ENCODE measurements at regions of chr11 and their contacts with region 1.

Region 1: DNA sequence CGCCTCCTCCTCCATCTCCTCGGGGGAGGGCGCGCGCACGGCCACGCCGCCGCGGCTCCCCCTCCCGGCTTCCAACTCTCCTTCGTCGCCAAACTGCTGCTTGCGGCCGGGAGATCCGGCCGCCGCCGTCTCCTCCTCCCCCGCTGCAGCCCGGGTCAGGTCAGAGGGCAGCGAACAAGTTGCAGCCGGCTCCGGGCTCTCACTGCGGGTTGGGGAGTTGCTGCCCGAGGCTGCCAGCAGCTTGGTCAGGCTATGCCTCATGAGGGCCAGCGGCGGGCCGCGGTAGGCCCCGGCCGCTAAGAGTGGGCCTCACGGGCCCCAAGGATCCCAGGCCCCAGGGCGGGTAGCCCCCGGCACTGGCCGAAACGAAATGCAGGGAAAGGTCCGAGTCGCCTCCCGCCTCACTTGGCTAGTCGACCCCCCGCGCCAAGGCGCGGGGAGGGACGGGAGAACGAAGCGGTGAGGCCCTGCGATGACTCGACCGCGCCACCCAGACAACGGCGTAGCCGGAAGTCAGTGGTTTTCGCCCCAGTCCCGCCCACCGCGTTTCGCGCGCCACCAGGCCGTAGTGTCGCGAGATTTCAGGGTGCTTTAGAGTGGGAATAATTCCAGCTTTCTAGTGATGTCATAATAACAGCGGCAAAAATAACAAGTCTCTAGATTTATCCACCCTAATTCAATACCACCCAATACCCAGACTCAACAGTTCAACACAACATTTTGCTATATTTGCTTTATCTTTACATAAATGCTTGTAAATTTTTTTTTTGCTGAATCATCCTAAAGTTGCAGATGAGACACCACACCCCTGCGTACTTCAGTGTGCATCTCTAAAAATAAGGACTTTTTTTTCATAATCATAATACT is at the start of gene CREBZF:
- DNase-seq: peak; percentile 96
- ATAC-seq: peak; percentile 78
- H3K4me3 Mint-ChIP-seq: peak within 1 kb of the TSS; percentile 98
- H3K27ac Mint-ChIP-seq: peak within 1 kb of the TSS; percentile 98
- H3K4me1 Mint-ChIP-seq: peaks cover 29% of the 10 kb centered on the region
- H3K27me3 Mint-ChIP-seq: peaks cover 1% of the 10 kb centered on the region
- total RNA-seq, gene CREBZF: 77.7 to 78.4 TPM

Region 2: DNA sequence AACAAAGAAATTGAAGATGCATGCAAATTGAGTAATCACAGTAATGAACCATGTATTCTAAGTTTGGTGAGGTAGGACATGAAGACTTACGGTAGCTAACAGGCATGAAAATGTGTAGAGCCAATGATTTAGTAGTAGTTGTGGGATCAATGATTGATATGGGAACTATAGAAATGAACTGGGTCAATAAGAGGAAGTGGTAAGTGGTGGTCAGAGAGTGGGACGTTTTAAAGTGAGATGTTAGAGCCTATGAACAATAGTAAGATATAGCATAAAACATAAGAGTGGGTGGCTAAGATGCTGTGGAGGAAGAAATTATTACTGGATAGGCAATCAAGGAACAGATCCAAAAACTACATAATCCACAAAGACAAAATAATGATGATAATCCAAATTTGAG is 82.7 kb before region 1 on chr11:
- POLR2A ChIA-PET with region 1: no interaction called
- DNase-seq: no peak
- ATAC-seq: no peak
- H3K4me3 Mint-ChIP-seq: no peak overlapping the region
- H3K27ac Mint-ChIP-seq: no peak overlapping the region
- H3K4me1 Mint-ChIP-seq: no peaks in the 10 kb centered on the region
- H3K27me3 Mint-ChIP-seq: peaks cover 13% of the 10 kb centered on the region

Region 3: DNA sequence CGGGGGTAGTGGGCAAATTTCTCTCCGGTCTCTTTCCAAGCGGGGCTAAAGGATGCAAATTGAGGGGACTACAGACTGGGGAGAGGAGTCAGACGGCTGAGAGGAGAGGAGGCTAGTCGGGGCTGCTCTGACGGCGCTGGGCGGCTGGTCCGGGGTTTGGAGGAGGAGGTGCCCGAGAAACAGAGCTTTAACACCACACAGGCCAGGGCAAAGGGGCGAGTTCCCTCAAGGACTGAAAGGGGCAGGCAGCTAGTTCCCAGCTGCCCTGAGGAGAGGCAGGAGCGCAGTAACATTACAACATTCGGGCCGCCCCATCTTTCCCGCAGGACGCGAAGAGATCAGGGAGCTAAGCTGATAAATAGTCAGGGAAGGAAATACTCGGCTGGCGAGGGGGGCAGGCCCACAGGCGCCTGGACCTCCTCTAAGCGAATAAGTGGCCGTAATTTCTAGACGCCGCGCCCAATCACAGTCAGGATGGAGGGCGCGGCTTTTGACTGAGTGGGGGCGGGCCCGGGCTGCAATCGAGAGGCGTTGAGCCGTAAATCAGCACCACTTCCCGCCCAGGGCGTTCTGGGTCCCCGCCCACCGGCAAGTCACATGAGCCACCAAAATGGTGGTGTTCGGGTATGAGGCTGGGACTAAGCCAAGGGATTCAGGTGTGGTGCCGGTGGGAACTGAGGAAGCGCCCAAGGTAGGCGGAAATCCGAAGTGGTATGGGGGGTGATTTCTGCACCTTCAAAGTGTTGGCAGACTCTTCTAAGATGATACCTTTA is 36.7 kb before region 1 on chr11 and contains the start of gene TMEM126B:
- POLR2A ChIA-PET with region 1: interaction called, 18 read pairs
- DNase-seq: peak; percentile 94
- ATAC-seq: peak; percentile 99
- H3K4me3 Mint-ChIP-seq: peak within 1 kb of the TSS; percentile 97
- H3K27ac Mint-ChIP-seq: peak within 1 kb of the TSS; percentile 95
- H3K4me1 Mint-ChIP-seq: peaks cover 29% of the 10 kb centered on the region
- H3K27me3 Mint-ChIP-seq: peaks cover 2% of the 10 kb centered on the region
- total RNA-seq, gene TMEM126B: 52.8 to 53.9 TPM

Region 4: DNA sequence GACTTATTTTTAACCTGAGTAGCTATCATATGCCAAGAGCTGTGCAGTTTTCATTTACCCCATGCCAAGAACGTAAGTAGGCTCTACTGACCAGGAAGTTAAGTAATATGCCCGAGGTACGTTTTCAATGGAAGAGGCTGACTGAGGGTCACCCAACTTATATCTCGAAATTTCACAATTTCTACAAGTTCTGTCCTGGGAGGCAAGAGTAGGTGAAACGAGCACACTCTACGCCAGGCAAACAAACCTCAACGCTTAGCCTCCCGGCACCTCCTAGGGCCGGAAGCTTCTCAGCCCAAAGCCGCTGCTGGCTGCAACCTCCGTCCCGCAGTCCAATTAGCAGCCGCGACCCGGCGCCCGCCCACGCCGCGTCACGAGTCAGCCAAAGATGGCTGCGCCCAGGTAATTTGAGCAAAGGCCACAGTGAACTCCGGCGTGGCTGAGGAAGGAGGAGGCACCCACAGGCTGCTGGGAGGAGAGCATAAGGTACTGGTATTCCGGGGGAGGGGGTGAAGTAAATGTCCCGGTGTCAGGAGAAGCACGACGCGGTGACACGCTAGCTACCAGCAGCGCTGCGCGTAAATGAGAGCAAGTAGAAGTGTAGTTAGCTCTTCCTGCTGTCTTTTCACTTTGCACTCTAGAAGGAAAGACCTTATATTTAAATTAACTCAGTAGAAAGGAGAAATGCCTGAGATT is 17.1 kb before region 1 on chr11 and contains the start of gene TMEM126A:
- POLR2A ChIA-PET with region 1: interaction called, 72 read pairs
- DNase-seq: peak; percentile 93
- ATAC-seq: peak; percentile 98
- H3K4me3 Mint-ChIP-seq: peak within 1 kb of the TSS; percentile 99
- H3K27ac Mint-ChIP-seq: peak within 1 kb of the TSS; percentile 99
- H3K4me1 Mint-ChIP-seq: peaks cover 27% of the 10 kb centered on the region
- H3K27me3 Mint-ChIP-seq: peaks cover 21% of the 10 kb centered on the region
- total RNA-seq, gene TMEM126A: 27.2 to 28.8 TPM

Region 5: GRCh38 chr11:85652786-85653447 is 11.9 kb before region 1 on chr11:
- POLR2A ChIA-PET with region 1: interaction called, 72 read pairs
- DNase-seq: no peak
- ATAC-seq: peak; percentile 40
- H3K4me3 Mint-ChIP-seq: peak overlapping the region; percentile 42
- H3K27ac Mint-ChIP-seq: peak overlapping the region; percentile 68
- H3K4me1 Mint-ChIP-seq: peaks cover 35% of the 10 kb centered on the region
- H3K27me3 Mint-ChIP-seq: no peaks in the 10 kb centered on the region

Region 6: DNA sequence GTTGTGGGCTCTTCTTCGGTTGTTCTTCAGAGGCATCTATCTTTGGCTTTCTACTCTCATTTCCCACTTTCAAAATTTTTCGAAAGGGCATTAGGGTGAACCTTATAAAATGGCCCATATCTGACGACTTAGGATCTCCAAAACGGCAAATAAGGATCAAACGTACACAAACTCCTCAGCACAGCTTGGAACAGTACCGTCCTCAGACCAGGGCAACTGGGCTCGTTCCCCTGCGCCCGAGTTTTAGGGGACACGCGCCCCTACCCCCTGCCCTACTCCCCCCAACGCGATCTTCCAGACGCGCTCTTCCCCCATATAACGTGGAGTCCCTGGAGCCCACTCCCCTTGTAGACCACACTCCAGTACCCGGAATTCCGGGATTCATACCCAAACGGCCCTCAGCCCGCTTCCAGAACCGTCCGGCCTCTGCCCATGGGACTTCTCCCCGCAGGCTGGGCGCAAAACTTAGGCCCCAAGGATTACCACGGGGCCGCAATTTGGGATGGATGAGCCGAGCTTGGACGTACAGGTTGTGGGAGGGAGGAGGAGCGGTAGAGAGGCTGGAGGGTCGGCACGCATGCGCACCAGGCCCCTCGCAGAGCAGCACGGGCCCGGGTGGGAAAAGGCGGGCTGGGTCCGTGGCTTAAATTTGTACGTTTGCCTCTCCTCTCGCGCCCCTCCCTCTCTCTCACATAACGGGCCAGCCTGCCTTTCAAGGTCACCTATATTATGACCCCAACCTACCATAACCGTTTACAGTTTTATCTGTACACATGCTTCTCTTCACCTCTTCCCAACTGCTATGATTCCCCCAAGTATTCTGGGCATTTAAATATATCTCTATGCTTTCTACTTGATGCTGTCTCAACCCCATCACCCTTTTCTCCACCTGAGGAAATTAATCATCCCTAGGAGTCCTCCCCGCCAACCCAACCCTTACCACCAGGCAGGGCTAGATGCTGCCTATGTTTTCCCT is 17.8 kb after region 1 on chr11:
- POLR2A ChIA-PET with region 1: interaction called, 20 read pairs
- DNase-seq: peak; percentile 79
- ATAC-seq: peak; percentile 95
- H3K4me3 Mint-ChIP-seq: peak overlapping the region; percentile 88
- H3K27ac Mint-ChIP-seq: peak overlapping the region; percentile 84
- H3K4me1 Mint-ChIP-seq: peaks cover 14% of the 10 kb centered on the region
- H3K27me3 Mint-ChIP-seq: no peaks in the 10 kb centered on the region

Region 7: DNA sequence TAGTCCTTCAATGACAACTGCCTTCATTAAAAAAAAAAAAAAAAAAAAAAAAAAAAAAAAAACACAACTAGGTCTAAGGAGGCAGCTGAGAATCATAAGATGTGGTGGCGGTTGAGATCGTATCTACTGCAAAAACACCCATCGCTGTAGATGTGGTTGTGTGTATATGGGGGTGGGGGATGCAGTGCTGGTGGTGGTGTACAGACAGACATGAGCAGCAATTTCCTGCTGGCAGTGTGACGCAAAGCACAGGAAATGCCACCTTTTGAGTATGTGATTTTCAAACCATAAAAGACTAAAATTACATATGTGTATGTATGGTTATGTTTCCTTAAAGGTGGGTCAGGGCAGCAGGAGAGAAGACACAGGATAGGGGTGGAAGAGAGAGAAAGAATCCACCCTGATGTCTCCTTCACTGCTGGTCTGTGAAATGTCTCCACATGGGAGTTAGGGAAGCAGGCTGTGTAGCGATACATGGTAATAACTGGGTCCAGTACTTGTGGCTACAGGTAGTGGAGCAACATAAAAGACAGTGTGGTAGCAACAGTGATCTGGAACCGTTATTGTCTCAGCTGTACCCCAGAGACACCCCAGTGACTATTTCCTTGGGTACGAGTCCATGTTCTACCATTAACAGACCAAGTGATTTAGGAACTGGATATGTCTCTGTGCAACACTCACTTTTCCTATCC is 88.2 kb after region 1 on chr11:
- POLR2A ChIA-PET with region 1: interaction called, 24 read pairs
- DNase-seq: peak; percentile 73
- ATAC-seq: peak; percentile 82
- H3K4me3 Mint-ChIP-seq: peak overlapping the region; percentile 65
- H3K27ac Mint-ChIP-seq: peak overlapping the region; percentile 92
- H3K4me1 Mint-ChIP-seq: peaks cover 72% of the 10 kb centered on the region
- H3K27me3 Mint-ChIP-seq: no peaks in the 10 kb centered on the region